ENCODE measurements at regions of chr1 and their contacts with region 1.

Region 1: DNA sequence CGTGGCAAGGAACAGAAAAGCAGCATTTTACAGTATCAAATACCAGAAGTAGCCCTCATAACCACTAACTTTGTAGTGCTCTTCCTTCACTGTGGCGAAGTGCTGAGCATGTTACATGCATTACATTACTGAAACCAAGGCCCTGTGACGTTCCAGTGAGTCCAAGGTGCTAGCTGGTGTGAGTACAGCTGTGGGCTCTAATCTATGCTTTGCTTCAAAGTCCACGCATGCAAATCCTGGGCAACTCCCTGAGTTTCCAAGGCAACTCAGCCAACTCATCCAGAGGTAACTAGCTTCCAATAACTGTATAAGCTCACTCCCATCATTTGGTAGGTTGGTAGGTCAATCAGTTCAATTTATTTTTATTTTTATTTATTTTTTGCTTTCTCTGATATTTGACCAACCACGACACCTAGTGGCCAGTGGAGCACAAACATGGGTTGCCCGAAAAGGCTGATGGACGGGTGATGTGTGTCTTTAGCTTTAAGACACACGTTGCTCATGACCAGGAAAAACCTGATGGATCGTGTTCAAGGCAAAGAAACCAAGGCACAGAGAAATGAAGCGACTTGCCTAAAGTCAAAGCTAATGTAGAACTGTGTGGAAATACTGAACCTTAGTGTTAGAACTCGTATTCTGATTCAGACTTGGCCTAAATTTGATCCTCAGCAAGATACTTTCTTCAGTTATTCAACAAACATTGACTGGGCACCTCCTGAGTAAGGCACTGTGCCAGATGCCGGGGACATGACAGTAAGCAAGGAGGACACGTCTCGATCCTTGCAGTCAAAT is 73.0 kb downstream of the GNG12 start:
- DNase-seq: peak; percentile 78
- H3K4me3 ChIP-seq: no peak overlapping the region
- H3K27ac ChIP-seq: peak overlapping the region; percentile 24
- H3K4me1 ChIP-seq: peaks cover 7% of the 10 kb centered on the region
- H3K27me3 ChIP-seq: no peaks in the 10 kb centered on the region
- CTCF ChIP-seq: peak; percentile 67 to 85
- POLR2A ChIP-seq: no peak

Region 2: GRCh38 chr1:67544921-67545320 is 215.3 kb before region 1 on chr1:
- CTCF ChIA-PET with region 1: interaction called, 392 read pairs
- POLR2A ChIA-PET with region 1: no interaction called
- dilution Hi-C with region 1: loop called (anchors 25 kb)
- intact Hi-C with region 1: no loop called
- DNase-seq: no peak
- H3K4me3 ChIP-seq: no peak overlapping the region
- H3K27ac ChIP-seq: no peak overlapping the region
- H3K4me1 ChIP-seq: no peaks in the 10 kb centered on the region
- H3K27me3 ChIP-seq: no peaks in the 10 kb centered on the region
- CTCF ChIP-seq: no peak
- POLR2A ChIP-seq: no peak

Region 3: DNA sequence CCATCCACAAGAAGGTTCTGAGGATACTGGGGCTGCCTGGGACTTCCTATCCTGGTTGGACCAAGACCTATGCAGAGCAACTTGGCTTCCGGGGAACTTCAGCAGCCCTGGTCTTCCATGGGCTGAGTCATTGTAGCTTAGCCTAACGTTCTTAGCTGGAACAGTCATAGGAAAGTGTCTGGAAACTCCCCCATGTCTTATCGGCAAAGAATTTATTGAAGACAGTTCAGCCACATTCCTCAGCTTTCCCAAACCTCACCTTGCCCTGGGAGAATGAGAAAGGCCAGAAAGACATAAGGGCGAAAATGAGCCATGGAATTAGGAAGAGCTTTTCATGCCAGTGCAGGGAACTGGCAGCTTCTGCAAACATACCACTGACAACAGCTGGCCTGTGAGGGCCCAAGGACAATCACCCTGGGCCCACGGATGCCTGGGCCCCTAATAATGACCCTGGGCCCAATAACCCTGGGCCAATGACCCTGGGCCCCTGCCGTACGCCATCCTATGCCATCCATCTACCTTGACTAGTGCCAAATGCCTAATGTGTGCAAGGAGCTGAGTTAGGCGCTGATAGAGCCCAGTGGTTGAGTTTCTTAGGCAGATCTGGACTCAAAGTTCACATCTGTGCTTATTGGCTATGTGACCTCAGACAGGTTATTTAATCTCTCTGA is 189.6 kb before region 1 on chr1:
- CTCF ChIA-PET with region 1: interaction called, 15 read pairs
- POLR2A ChIA-PET with region 1: no interaction called
- dilution Hi-C with region 1: no loop called
- intact Hi-C with region 1: no loop called
- DNase-seq: peak; percentile 50
- H3K4me3 ChIP-seq: no peak overlapping the region
- H3K27ac ChIP-seq: no peak overlapping the region
- H3K4me1 ChIP-seq: peaks cover 5% of the 10 kb centered on the region
- H3K27me3 ChIP-seq: no peaks in the 10 kb centered on the region
- CTCF ChIP-seq: no peak
- POLR2A ChIP-seq: no peak

Region 4: GRCh38 chr1:67700692-67701410 is 59.4 kb before region 1 on chr1:
- CTCF ChIA-PET with region 1: interaction called, 21 read pairs
- POLR2A ChIA-PET with region 1: no interaction called
- dilution Hi-C with region 1: no loop called
- intact Hi-C with region 1: no loop called
- DNase-seq: peak; percentile 88
- H3K4me3 ChIP-seq: no peak overlapping the region
- H3K27ac ChIP-seq: peak overlapping the region; percentile 38
- H3K4me1 ChIP-seq: peaks cover 6% of the 10 kb centered on the region
- H3K27me3 ChIP-seq: no peaks in the 10 kb centered on the region
- CTCF ChIP-seq: peak in 1 of 2 donors; percentile 50
- POLR2A ChIP-seq: no peak

Region 5: DNA sequence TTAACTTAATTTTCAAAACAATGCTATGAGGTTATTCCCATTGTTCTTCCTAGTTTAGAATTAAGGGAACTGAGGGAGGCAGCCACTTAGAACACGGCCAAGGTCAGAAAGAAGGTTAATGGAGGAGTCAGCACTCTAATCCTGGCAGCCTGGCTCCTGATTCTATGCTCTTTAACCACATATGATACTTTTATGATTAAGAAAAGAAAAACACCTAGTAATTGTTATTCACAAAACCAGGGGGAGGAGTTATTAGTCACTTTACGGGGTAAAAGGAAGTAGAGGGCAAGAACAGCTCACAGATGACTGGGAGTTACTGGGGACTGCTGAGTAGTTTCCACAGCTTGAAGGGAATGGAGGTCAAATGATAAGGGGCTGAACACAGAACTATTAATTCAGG is 36.6 kb before region 1 on chr1:
- CTCF ChIA-PET with region 1: interaction called, 19 read pairs
- POLR2A ChIA-PET with region 1: no interaction called
- dilution Hi-C with region 1: no loop called
- intact Hi-C with region 1: loop called (anchors 2 kb)
- DNase-seq: peak; percentile 97
- H3K4me3 ChIP-seq: peak overlapping the region in 1 of 3 experiments; percentile 17
- H3K27ac ChIP-seq: peak overlapping the region; percentile 95
- H3K4me1 ChIP-seq: peaks cover 68% of the 10 kb centered on the region
- H3K27me3 ChIP-seq: no peaks in the 10 kb centered on the region
- CTCF ChIP-seq: no peak
- POLR2A ChIP-seq: peak; percentile 40

Region 6: GRCh38 chr1:67749844-67750689 is 10.2 kb before region 1 on chr1:
- CTCF ChIA-PET with region 1: interaction called, 13 read pairs
- POLR2A ChIA-PET with region 1: no interaction called
- dilution Hi-C with region 1: no loop called
- intact Hi-C with region 1: no loop called
- DNase-seq: peak; percentile 76
- H3K4me3 ChIP-seq: no peak overlapping the region
- H3K27ac ChIP-seq: peak overlapping the region; percentile 55
- H3K4me1 ChIP-seq: peaks cover 67% of the 10 kb centered on the region
- H3K27me3 ChIP-seq: no peaks in the 10 kb centered on the region
- CTCF ChIP-seq: no peak
- POLR2A ChIP-seq: no peak

Region 7: DNA sequence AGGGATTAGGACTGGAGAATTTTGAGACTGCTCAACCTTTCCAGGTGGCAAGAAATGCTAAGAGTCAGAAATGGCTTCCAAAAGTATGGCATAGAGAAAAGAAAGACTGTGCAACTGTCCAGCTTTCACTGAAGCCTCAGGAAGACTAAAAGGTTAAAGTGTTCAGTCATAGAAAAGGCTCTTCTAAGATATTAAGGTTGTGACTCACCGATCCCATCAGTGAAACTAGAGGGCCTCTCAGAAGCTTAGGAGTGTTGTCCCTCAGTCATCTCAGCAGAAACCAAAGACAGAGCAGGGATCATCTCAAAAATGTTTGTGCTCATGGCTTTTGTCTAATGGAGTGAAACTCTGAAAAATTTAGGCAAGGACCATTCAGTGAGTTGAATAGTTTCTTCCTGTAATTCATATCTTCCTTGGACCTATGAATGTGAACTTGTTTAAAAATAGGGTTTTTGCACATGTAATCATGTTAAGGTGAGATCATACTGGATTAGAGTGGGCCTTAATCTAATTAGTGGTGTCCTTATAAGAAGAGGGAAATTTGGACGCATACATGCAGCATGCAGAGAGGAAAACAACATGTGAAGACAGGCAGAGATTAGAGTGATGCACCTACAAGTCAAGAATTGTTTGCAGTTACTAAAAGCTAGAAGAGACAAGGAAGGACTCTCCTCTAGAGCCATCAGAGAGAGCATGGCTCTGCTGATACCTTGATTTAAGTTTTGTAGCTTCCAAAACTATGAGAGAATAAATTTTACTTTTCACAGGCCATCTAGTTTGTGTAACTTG is 618.3 kb after region 1 on chr1:
- CTCF ChIA-PET with region 1: no interaction called
- POLR2A ChIA-PET with region 1: no interaction called
- dilution Hi-C with region 1: no loop called
- intact Hi-C with region 1: no loop called
- DNase-seq: peak; percentile 11
- H3K4me3 ChIP-seq: no peak overlapping the region
- H3K27ac ChIP-seq: peak overlapping the region; percentile 35
- H3K4me1 ChIP-seq: peaks cover 24% of the 10 kb centered on the region
- H3K27me3 ChIP-seq: no peaks in the 10 kb centered on the region
- CTCF ChIP-seq: no peak
- POLR2A ChIP-seq: no peak